Activated CD4-positive, alpha-beta T cell treated with anti-CD3 and anti-CD28 coated beads for 36 hours (primary cell): ENCODE measurements at regions of chr12 and their contacts with region 1.

Region 1: DNA sequence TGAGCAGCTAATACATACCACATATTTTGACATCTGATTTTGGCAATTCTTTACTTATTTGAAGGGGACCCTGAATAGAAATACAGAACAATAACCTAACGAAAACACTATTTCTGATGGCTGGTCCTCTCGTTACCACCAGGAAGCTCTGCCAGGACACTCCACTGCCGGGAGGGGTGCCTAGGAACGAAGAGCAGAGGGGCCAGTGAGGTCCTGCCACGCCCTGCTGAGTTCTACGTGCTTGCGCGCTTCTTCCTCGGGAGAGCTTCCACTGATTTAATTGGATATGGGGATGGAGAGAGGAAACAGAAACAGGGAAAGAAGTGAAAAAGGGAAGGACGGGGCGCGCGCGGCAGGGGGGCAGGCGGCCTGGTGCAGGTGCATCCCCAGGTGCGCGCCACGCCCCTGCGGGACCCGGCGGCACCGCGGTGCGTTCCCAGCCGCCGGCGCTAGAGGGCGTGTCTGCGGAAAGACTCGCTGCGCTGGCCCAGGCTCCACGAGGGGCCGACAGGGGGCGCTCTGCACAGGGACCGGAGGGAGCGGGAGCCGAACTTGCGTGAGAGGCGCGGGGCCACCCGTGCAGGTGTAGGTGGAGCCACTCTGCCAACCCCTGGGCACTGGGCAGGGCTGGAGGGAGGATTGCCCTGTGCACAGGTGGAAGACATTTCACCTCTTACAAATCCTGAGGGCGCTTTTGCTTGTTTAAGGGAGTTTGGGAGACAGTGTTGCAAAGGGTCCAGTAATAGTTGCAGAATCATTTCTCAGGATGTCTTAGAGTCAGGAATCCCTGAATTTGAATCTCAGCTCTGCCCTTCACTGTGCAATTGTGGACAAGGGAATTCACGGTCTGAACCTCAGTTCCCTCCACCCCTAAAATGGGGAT is 986.3 kb upstream of the TMEM132C start:
- DNase-seq: peak; percentile 89
- ATAC-seq: peak; percentile 95
- H3K4me3 Mint-ChIP-seq: no peak overlapping the region
- H3K27ac Mint-ChIP-seq: no peak overlapping the region
- H3K4me1 Mint-ChIP-seq: no peaks in the 10 kb centered on the region
- H3K27me3 Mint-ChIP-seq: peaks cover 6% of the 10 kb centered on the region

Region 2: DNA sequence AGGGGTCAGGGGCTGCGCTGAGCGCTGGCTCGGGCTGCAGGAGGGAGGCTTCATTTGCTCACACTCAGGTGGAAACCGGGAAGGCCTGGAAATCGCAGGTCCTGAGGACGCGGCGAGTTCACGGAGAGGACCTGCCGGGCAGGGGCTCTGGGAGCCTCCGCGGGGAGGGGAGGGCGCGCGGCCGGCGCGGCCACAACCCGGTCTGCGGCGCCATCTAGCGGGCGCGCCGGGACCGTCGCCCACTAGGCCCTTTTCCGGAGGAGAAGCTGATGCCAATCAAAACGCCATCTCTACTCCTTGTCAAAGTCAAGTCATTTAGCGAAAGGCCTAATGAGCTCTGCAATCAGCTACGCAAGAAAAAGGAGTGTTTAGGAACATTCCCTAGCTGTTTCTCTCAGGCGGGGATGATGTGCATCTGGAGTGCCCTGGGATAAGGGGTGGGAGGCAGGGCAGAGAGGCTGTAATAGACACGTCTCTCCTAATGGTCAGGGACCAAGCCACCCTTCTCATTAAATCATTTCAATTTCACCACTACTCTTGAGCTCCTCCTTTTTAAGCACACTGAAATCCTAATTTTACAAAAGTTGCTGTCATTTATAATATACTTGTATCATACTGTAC is 100.5 kb after region 1 on chr12:
- CTCF ChIA-PET with region 1: interaction called, 3 read pairs
- POLR2A ChIA-PET with region 1: no interaction called
- intact Hi-C with region 1: loop called in 1 of 2 experiments (anchors 1 kb)
- DNase-seq: peak; percentile 65
- ATAC-seq: peak; percentile 53
- H3K4me3 Mint-ChIP-seq: no peak overlapping the region
- H3K27ac Mint-ChIP-seq: no peak overlapping the region
- H3K4me1 Mint-ChIP-seq: no peaks in the 10 kb centered on the region
- H3K27me3 Mint-ChIP-seq: peaks cover 7% of the 10 kb centered on the region

Region 3: GRCh38 chr12:127677537-127678131 is 397.0 kb after region 1 on chr12:
- CTCF ChIA-PET with region 1: interaction called, 3 read pairs
- POLR2A ChIA-PET with region 1: no interaction called
- intact Hi-C with region 1: loop called (anchors 1 to 5 kb)
- DNase-seq: peak; percentile 74
- ATAC-seq: no peak
- H3K4me3 Mint-ChIP-seq: no peak overlapping the region
- H3K27ac Mint-ChIP-seq: no peak overlapping the region
- H3K4me1 Mint-ChIP-seq: no peaks in the 10 kb centered on the region
- H3K27me3 Mint-ChIP-seq: no peaks in the 10 kb centered on the region

Region 4: GRCh38 chr12:128069359-128069997 is 788.8 kb after region 1 on chr12:
- CTCF ChIA-PET with region 1: no interaction called
- POLR2A ChIA-PET with region 1: no interaction called
- intact Hi-C with region 1: loop called in 1 of 2 experiments (anchors 2 kb)
- DNase-seq: peak; percentile 49
- ATAC-seq: no peak
- H3K4me3 Mint-ChIP-seq: no peak overlapping the region
- H3K27ac Mint-ChIP-seq: no peak overlapping the region
- H3K4me1 Mint-ChIP-seq: no peaks in the 10 kb centered on the region
- H3K27me3 Mint-ChIP-seq: no peaks in the 10 kb centered on the region